Activated naive CD4-positive, alpha-beta T cell treated with anti-CD3 and anti-CD28 coated beads, Interleukin-2, amount 10 ng/mL, durations not matched to agents 7 days and 5 days (primary cell): ENCODE measurements at regions of chr11 and their contacts with region 1.

Region 1: GRCh38 chr11:44538375-44539054 is 26.9 kb upstream of the CD82 start:
- DNase-seq: peak; percentile 81
- H3K4me3 Mint-ChIP-seq: no peak overlapping the region
- H3K27ac Mint-ChIP-seq: no peak overlapping the region
- H3K4me1 Mint-ChIP-seq: peaks cover 2% of the 10 kb centered on the region
- H3K27me3 Mint-ChIP-seq: peaks cover 16% of the 10 kb centered on the region

Region 2: DNA sequence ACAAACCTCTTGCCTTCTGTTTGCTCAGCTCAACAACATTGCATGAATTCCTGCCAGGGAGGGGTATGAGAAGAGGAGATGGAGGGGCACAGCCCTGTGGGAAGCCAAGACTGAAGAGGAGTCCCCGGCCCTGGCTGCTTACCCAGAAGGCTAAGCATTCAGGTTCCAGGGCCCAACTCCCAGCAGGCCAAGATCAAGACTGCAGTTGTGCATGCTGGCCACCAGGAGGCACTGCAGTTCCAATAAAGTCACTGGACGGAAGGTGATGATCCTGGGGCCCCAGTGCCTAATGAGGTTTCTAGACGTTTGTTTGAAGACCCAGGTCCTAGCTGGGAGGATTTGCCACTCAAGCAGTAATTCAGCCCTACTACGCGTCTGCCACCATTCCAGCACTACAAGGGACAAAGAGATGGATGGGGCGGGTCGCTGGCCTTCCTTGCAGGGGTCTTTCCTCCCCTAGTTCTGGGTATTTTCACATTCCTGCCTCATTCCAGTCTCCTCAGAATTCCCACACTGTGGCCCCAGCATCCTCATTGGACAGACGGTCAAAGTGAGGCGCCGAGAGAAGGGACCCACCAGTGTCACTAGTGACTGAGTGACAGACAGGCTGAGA is 252.1 kb before region 1 on chr11:
- CTCF ChIA-PET with region 1: interaction called, 14 read pairs
- DNase-seq: peak; percentile 75
- H3K4me3 Mint-ChIP-seq: no peak overlapping the region
- H3K27ac Mint-ChIP-seq: no peak overlapping the region
- H3K4me1 Mint-ChIP-seq: no peaks in the 10 kb centered on the region
- H3K27me3 Mint-ChIP-seq: peaks cover 34% of the 10 kb centered on the region

Region 3: DNA sequence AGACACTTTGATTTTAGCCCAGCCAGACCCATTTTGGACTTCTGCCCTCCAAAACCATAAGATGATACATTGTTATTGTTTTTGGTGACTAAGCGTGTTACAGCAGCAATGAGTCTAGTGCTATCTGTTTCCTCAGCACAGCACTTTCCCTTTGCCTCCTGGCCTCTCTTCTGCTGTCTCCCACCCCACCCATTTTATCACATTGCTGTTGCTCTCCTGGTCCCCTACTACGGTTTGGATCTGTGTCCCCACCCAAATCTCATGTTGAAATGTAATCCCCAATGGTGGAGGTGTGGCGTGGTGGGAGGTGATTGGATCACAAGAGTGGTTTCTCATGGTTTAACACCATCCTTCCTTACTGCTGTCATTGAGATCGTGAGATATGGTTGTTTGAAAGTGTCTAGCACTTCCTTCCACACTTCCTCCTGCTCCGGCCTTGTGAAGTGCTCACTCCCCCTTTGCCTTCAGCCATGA is 32.9 kb before region 1 on chr11:
- CTCF ChIA-PET with region 1: no interaction called
- DNase-seq: no peak
- H3K4me3 Mint-ChIP-seq: no peak overlapping the region
- H3K27ac Mint-ChIP-seq: no peak overlapping the region
- H3K4me1 Mint-ChIP-seq: no peaks in the 10 kb centered on the region
- H3K27me3 Mint-ChIP-seq: peaks cover 15% of the 10 kb centered on the region

Region 4: GRCh38 chr11:44524751-44525201 is 13.7 kb before region 1 on chr11:
- CTCF ChIA-PET with region 1: interaction called, 41 read pairs
- DNase-seq: no peak
- H3K4me3 Mint-ChIP-seq: no peak overlapping the region
- H3K27ac Mint-ChIP-seq: peak overlapping the region; percentile 24
- H3K4me1 Mint-ChIP-seq: peaks cover 7% of the 10 kb centered on the region
- H3K27me3 Mint-ChIP-seq: peaks cover 45% of the 10 kb centered on the region

Region 5: GRCh38 chr11:44565211-44565952 is 26.9 kb after region 1 on chr11 and contains the start of gene CD82:
- CTCF ChIA-PET with region 1: no interaction called
- DNase-seq: peak; percentile 99
- H3K4me3 Mint-ChIP-seq: peak within 1 kb of the TSS; percentile 84
- H3K27ac Mint-ChIP-seq: peak within 1 kb of the TSS; percentile 78
- H3K4me1 Mint-ChIP-seq: peaks cover 74% of the 10 kb centered on the region
- H3K27me3 Mint-ChIP-seq: no peaks in the 10 kb centered on the region

Region 6: GRCh38 chr11:44596525-44597276 is 58.2 kb after region 1 on chr11:
- CTCF ChIA-PET with region 1: no interaction called
- DNase-seq: peak; percentile 87
- H3K4me3 Mint-ChIP-seq: peak overlapping the region; percentile 64
- H3K27ac Mint-ChIP-seq: peak overlapping the region; percentile 99
- H3K4me1 Mint-ChIP-seq: peaks cover 76% of the 10 kb centered on the region
- H3K27me3 Mint-ChIP-seq: no peaks in the 10 kb centered on the region